Ovary (tissue), 10 donors: ENCODE measurements at regions of chr21 and their contacts with region 1.

Region 1: DNA sequence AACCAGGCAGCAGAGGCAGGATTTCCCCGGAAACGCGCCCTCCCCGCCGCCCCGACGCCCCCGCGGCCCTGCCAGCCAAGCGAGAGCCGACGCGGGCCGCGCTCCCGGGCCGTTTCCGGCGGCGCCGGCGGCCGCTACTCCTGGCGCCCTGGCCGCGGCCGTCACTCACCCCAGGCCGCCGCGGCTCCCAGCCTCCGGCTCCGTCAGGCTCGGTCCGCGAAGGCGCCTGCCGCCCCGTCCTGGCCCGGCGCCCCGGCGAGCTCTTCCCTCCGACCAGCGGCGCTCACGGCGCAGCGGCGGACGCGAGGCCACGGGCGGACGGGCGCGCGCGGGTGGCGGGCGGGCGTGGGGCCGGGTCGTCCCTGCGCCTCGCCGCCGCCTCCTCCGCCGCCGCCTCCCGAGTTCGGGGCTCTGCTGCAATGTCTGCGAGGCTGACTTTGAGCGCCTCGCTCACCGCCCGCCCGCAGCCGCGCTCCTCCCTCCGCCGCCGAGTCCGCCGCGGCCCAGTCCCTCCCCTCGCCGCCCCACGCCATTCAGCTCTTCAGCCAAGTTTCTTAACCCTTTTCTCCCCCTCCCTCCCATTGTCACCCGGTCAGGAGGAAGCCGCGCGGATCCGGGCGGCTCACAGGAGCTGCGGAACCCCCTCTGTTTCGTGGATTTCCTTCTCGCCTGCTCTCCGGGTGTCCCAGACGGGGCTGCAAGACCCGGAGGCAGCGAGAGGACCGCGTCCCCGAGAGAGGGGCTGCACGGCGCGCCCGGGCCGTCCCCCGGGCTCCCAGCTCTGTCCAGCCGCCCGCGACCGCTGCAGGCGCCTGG is at the start of gene NRIP1:
- DNase-seq: peak; percentile 90 to 94 (median 92)
- H3K4me3 ChIP-seq: peak within 1 kb of the TSS; percentile 84
- H3K27ac ChIP-seq: peak within 1 kb of the TSS; percentile 77 to 99
- H3K4me1 ChIP-seq: no peaks in the 10 kb centered on the region
- H3K27me3 ChIP-seq: no peaks in the 10 kb centered on the region
- CTCF ChIP-seq: no peak
- EP300 ChIP-seq: no peak
- POLR2A ChIP-seq: peak; percentile 56
- total RNA-seq, gene NRIP1: 33.3 to 56.6 (median 43.1) TPM

Region 2: GRCh38 chr21:14864211-14865021 is 200.4 kb before region 1 on chr21:
- intact Hi-C with region 1: loop called in 2 of 4 experiments (anchors 10 kb)
- DNase-seq: peak; percentile 63 to 80 (median 70)
- H3K4me3 ChIP-seq: no peak overlapping the region
- H3K27ac ChIP-seq: no peak overlapping the region
- H3K4me1 ChIP-seq: peaks cover 4% of the 10 kb centered on the region
- H3K27me3 ChIP-seq: no peaks in the 10 kb centered on the region
- CTCF ChIP-seq: peak in 2 of 3 donors; percentile 31 to 36
- EP300 ChIP-seq: no peak
- POLR2A ChIP-seq: no peak